ENCODE measurements at regions of chr10 and their contacts with region 1.

Region 1: DNA sequence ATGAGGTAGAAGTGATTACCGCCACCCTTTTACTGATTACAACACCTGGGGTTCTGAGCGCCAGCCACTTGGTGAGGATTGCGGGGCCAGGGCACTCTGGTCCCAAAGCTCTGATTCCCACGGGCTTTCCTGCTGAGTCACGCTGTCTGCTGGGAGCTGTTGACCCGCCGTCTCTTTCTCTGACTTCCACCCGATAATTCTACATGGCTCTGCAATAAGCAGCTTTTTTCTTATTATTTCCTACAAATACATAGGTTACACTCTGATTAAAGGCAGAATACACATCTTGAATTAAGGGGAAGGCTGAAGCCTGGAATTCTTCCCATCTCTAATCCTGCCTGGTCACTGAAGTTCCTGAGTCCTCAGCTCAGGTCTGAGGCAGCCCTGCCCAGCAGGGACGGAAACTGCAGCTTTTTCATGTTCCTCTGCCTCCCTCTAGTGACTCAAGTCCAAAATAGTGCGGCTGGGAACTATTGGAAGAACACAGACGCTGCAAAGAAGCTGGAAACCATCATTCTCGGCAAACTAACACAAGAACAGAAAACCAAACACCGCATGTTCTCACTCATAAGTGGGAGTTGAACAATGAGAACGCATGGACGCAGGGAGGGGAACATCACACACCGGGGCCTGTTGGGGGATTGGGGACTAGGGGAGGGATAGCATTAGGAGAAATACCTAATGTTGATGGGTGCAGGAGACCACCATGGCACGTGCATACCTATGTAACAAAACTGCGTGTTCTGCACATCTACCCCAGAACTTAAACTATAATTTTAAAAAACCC is 178.3 kb downstream of the PRKCQ start:
- DNase-seq: peak; percentile 75
- H3K4me3 Mint-ChIP-seq: no peak overlapping the region
- H3K27ac Mint-ChIP-seq: no peak overlapping the region
- H3K4me1 Mint-ChIP-seq: peaks cover 14% of the 10 kb centered on the region
- H3K27me3 Mint-ChIP-seq: peaks cover 2% of the 10 kb centered on the region

Region 2: DNA sequence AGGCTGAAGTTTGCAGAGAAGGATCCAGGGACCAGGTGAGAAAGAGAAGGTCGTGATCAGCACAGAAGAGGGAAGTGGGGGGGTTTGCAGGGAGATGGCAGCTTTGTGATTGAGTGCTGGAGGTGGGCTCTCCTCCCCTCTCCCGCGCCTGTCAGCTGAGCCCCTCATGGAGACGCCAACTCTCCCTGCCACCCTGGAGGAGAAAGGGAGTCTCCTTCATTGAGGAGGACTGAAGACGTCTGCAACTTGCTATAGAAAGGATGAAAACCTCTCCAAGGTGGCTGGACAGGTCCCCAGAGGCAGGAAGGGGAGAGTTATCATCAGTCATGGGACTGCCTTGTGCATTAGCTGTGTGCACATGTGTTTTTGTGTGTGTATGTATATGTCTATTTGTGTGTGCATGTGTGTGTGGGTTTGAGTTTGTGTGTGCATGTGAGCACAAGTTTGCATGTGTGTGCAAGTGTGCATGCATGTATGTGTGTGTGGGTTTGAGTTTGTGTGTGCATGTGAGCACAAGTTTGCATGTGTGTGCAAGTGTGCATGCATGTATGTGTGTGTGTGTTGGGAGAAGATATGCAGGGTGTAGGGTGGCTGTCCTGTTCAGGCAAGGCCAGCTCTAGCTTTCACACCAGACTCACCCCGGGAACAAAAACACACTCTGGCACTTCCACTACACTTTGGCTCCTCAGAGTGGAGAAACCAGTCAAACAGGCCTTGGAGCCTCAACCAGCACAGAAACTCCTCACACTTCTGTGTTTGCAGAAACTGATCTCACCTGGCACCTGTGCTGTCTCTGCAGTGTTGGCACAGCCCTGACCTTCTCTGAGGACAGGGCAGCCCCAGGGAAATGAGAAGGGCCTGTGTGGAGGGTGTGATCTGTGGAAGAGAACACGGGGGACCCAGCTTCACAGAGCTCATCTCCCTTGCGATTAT is 898.6 kb before region 1 on chr10:
- CTCF ChIA-PET with region 1: no interaction called
- intact Hi-C with region 1: no loop called
- DNase-seq: no peak
- H3K4me3 Mint-ChIP-seq: no peak overlapping the region
- H3K27ac Mint-ChIP-seq: no peak overlapping the region
- H3K4me1 Mint-ChIP-seq: no peaks in the 10 kb centered on the region
- H3K27me3 Mint-ChIP-seq: no peaks in the 10 kb centered on the region

Region 3: DNA sequence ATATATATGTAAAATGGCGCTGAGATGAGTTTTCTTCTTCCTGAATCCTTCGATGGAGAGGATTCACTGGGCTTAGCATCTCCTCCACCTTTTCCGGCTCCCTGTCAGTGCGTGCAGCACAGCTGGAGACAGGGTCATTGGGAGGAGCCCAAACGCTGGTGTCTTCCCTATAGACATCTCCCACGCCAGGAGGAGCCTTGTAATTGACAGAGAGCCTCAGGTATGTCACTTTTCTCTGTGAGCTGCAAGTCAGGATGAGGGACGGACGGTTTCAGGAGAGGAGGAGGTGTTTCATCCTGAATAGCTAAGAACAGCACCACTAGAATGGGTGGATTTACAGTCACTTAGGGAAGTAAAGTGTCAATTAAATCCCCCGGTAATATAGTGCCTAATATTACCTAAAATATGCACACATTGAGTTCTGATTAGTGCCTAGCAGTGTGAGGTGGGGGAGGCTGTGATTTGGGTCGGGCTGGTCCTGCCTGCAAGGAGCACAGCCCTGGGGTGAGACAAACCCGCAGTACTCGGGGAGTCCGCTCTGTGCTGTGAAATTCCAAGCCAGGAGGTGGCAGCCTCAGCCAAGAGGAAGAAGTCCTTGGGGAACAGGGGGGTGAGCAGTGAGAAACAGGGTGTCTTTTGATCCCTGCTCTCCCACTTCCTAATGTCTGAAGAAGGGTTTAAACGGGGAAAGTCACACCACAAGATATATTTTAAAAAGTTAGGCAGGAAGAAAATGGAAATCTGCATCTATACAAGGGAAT is 452.6 kb before region 1 on chr10:
- CTCF ChIA-PET with region 1: no interaction called
- intact Hi-C with region 1: loop called (anchors 10 kb)
- DNase-seq: peak; percentile 78
- H3K4me3 Mint-ChIP-seq: no peak overlapping the region
- H3K27ac Mint-ChIP-seq: no peak overlapping the region
- H3K4me1 Mint-ChIP-seq: peaks cover 10% of the 10 kb centered on the region
- H3K27me3 Mint-ChIP-seq: no peaks in the 10 kb centered on the region

Region 4: DNA sequence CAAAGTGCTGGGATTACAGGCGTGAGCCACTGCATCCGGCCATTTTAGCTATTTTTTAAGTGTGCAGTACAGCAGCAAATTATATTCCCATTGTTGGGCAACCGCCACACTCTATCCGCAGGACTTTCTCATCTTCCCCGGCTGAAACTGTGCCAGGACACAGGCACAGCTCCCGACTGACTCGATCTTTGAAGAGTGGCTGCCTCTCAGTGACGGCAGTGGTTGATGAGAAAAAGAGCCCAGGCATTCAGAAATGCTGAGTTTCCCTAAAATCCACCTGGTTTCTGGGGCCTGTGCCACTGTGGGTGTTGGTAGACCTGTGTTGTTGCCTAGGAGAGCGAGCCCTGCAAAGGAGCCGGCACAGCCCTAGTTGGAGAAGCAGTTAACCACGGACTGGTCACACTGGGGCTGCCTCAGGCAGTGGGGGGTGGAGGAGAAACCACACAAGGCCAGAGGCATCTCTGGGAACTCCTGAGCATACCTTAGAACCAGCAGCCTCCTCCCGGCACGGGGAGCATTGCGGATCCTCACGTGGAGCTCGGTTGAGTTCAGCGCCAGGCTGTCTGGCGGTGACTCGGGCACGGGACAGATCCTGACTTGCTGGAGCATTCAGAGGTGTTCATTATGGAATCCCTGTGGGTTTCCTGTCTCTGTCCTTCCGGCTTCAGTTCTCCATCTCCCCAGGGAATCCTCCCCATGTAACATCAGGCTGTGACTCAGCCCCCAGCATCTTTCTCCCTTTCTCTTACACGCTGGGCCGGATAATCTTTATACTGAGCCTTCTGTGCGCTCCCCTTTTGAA is 182.9 kb before region 1 on chr10:
- CTCF ChIA-PET with region 1: interaction called, 12 read pairs
- intact Hi-C with region 1: no loop called
- DNase-seq: no peak
- H3K4me3 Mint-ChIP-seq: no peak overlapping the region
- H3K27ac Mint-ChIP-seq: no peak overlapping the region
- H3K4me1 Mint-ChIP-seq: no peaks in the 10 kb centered on the region
- H3K27me3 Mint-ChIP-seq: no peaks in the 10 kb centered on the region

Region 5: GRCh38 chr10:6244510-6244909 is 157.2 kb before region 1 on chr10:
- CTCF ChIA-PET with region 1: interaction called, 14 read pairs
- intact Hi-C with region 1: no loop called
- DNase-seq: no peak
- H3K4me3 Mint-ChIP-seq: no peak overlapping the region
- H3K27ac Mint-ChIP-seq: no peak overlapping the region
- H3K4me1 Mint-ChIP-seq: peaks cover 9% of the 10 kb centered on the region
- H3K27me3 Mint-ChIP-seq: no peaks in the 10 kb centered on the region

Region 6: DNA sequence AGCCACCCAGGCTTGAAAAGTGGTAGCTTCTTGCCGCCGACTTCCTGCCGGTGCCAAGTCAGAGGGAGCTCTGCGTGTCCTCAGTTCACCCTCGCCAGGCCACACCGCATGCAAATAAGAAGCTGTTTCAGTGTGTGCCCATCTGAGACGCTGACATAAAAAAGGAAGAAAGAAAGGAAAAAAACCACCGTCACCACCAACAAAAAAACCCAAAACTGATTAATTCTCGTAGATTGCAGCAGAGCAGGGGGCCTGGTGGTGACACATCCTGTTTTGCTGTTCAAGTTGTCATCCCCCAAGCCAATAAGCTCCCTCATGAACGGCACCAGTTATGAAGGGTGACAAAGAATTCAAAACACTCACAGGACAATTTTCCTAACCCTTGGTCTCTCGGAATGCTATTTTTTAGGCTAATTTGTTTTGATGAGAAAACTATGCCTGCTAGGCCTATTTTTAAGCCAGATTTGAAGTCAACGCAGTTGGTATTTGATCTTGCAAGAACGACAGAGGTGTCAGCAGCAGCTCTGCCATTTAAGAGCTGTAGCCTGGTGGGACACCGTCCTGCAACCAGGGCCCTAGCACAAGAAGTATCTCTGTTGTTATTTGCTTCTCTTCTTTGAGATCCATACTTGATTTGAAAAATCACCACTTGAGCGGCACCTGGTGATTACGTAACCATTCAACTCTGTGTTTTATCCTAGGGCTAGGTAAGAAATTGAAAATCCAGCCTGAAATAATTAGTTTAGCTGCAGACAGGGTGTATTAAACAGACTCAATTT is 53.5 kb before region 1 on chr10:
- CTCF ChIA-PET with region 1: interaction called, 33 read pairs
- intact Hi-C with region 1: loop called (anchors 2 kb)
- DNase-seq: peak; percentile 94
- H3K4me3 Mint-ChIP-seq: peak overlapping the region; percentile 63
- H3K27ac Mint-ChIP-seq: peak overlapping the region; percentile 96
- H3K4me1 Mint-ChIP-seq: peaks cover 58% of the 10 kb centered on the region
- H3K27me3 Mint-ChIP-seq: no peaks in the 10 kb centered on the region

Region 7: DNA sequence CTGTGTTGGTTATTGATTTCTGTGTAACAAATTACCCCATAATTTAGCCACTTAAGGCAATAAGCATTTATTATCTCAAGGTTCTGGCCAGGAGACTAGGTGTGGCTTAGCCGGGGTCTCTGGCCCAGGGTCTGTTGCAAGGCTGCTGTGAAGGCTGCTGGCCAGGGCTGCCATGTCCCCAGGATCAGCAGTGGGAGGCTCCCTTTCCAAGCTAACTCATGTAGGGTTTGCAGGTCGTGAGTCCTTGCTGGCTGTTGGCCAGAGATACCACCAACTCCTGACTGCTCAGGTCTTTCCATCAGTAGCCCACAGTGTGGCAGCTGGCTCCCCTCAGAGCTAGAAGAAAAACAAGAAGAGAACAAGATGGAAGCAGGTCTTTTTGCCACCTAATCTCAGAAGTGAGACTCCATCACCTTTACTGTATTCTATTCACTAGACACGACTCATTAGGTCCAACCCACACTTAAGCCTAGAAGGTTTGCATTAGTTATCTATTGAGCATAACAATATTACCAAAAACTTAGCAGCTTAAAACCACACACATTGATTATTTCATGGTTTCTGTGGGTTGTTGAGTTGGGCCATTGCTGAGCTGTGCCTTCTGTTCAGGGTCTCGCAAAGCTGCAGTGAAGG is 13.4 kb before region 1 on chr10:
- CTCF ChIA-PET with region 1: interaction called, 22 read pairs
- intact Hi-C with region 1: no loop called
- DNase-seq: peak; percentile 30
- H3K4me3 Mint-ChIP-seq: no peak overlapping the region
- H3K27ac Mint-ChIP-seq: peak overlapping the region; percentile 68
- H3K4me1 Mint-ChIP-seq: peaks cover 18% of the 10 kb centered on the region
- H3K27me3 Mint-ChIP-seq: no peaks in the 10 kb centered on the region

Region 8: GRCh38 chr10:6431861-6432260 is 30.1 kb after region 1 on chr10:
- CTCF ChIA-PET with region 1: no interaction called
- intact Hi-C with region 1: no loop called
- DNase-seq: no peak
- H3K4me3 Mint-ChIP-seq: no peak overlapping the region
- H3K27ac Mint-ChIP-seq: no peak overlapping the region
- H3K4me1 Mint-ChIP-seq: peaks cover 5% of the 10 kb centered on the region
- H3K27me3 Mint-ChIP-seq: no peaks in the 10 kb centered on the region

Region 9: GRCh38 chr10:6912424-6912823 is 510.7 kb after region 1 on chr10:
- CTCF ChIA-PET with region 1: no interaction called
- intact Hi-C with region 1: no loop called
- DNase-seq: peak; percentile 40
- H3K4me3 Mint-ChIP-seq: no peak overlapping the region
- H3K27ac Mint-ChIP-seq: no peak overlapping the region
- H3K4me1 Mint-ChIP-seq: no peaks in the 10 kb centered on the region
- H3K27me3 Mint-ChIP-seq: no peaks in the 10 kb centered on the region

Measured in activated naive CD4-positive, alpha-beta T cell treated with anti-CD3 and anti-CD28 coated beads for 36 hours (primary cell).